ENCODE measurements at regions of chr10 and their contacts with region 1.

Region 1: GRCh38 chr10:16817125-16818019 is at the start of gene RSU1:
- DNase-seq: peak; percentile 100
- H3K4me3 ChIP-seq: peak within 1 kb of the TSS; percentile 61 to 88
- H3K27ac ChIP-seq: peak within 1 kb of the TSS; percentile 91 to 95
- H3K4me1 ChIP-seq: peaks cover 0 to 29% of the 10 kb centered on the region in 2 donors
- H3K27me3 ChIP-seq: no peaks in the 10 kb centered on the region
- CTCF ChIP-seq: no peak
- total RNA-seq, gene RSU1: 82.2 TPM

Region 2: GRCh38 chr10:16436758-16437539 is 380.4 kb before region 1 on chr10 and contains the start of gene PTER:
- intact Hi-C with region 1: loop called (anchors 2 kb)
- DNase-seq: peak; percentile 91 to 98
- H3K4me3 ChIP-seq: peak within 1 kb of the TSS; percentile 70 to 88
- H3K27ac ChIP-seq: peak within 1 kb of the TSS; percentile 82
- H3K4me1 ChIP-seq: peaks cover 0 to 16% of the 10 kb centered on the region in 2 donors
- H3K27me3 ChIP-seq: no peaks in the 10 kb centered on the region
- CTCF ChIP-seq: no peak
- total RNA-seq, gene PTER: 2.6 TPM

Region 3: GRCh38 chr10:18659120-18659818 is 1841.9 kb after region 1 on chr10 and contains the start of gene ARL5B:
- intact Hi-C with region 1: loop called (anchors 10 kb)
- DNase-seq: peak; percentile 94 to 99
- H3K4me3 ChIP-seq: peak within 1 kb of the TSS; percentile 87 to 99
- H3K27ac ChIP-seq: peak within 1 kb of the TSS; percentile 98
- H3K4me1 ChIP-seq: peaks cover 8 to 19% of the 10 kb centered on the region in 2 donors
- H3K27me3 ChIP-seq: no peaks in the 10 kb centered on the region
- CTCF ChIP-seq: peak in 1 of 3 experiments; percentile 10
- total RNA-seq, gene ARL5B: 8.3 TPM

Measured in ascending aorta (tissue), 2 donors.